CD8-positive, alpha-beta memory T cell (primary cell): ENCODE measurements at regions of chr1 and their contacts with region 1.

Region 1: GRCh38 chr1:28886731-28887418 is 27.5 kb upstream of the EPB41 start:
- DNase-seq: peak; percentile 85 to 92 (median 88)
- H3K4me3 ChIP-seq: peak overlapping the region; percentile 88
- H3K4me3 Mint-ChIP-seq: peak overlapping the region; percentile 82 to 98 (median 90)
- H3K27ac ChIP-seq: peak overlapping the region; percentile 83
- H3K27ac Mint-ChIP-seq: peak overlapping the region; percentile 88 to 98 (median 97)
- H3K4me1 ChIP-seq: peaks cover 47% of the 10 kb centered on the region
- H3K4me1 Mint-ChIP-seq: peaks cover 53 to 78% (median 68%) of the 10 kb centered on the region in 3 donors
- H3K27me3 ChIP-seq: no peaks in the 10 kb centered on the region
- H3K27me3 Mint-ChIP-seq: peaks cover 0 to 5% of the 10 kb centered on the region in 2 donors

Region 2: DNA sequence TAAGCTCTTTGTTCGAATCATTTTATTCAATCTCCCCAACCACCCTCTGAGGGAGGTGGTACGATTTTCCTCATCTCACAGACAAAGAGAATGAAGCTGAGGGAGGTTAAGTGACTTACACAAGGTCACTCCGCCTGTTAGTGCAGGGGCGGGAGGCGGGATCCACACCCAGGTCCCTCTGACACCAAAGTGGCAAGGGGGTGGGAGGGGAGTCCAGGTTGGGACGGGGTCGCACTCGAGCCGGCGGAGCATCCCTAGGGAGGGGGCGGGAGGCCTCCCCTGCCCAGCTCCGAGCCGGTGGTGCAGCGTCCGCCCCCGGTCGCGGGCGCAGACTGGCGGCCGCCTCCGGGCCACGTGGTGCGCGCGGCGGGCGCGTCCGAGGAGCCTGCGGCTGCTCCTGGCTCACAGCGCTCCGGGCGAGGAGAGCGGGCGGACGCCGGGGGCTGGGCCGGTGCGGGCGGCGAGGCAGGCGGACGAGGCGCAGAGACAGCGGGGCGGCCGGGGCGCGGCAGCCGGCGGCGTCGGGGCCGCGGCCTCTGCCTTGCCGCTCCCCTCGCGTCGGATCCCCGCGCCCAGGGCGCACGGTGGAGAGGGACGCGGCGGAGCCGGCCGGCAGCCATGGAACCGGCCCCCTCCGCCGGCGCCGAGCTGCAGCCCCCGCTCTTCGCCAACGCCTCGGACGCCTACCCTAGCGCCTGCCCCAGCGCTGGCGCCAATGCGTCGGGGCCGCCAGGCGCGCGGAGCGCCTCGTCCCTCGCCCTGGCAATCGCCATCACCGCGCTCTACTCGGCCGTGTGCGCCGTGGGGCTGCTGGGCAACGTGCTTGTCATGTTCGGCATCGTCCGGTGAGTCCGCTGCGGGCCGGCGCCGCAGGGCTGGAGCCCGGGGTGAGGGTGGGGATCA is 74.9 kb before region 1 on chr1 and contains the start of gene OPRD1:
- CTCF ChIA-PET with region 1: no interaction called
- POLR2A ChIA-PET with region 1: no interaction called
- DNase-seq: no peak
- H3K4me3 ChIP-seq: no peak within 1 kb of the TSS
- H3K4me3 Mint-ChIP-seq: peak within 1 kb of the TSS in 1 of 7 donors; percentile 32
- H3K27ac ChIP-seq: no peak within 1 kb of the TSS
- H3K27ac Mint-ChIP-seq: no peak within 1 kb of the TSS
- H3K4me1 ChIP-seq: no peaks in the 10 kb centered on the region
- H3K4me1 Mint-ChIP-seq: peaks cover 0 to 10% (median 5%) of the 10 kb centered on the region in 3 donors
- H3K27me3 ChIP-seq: peaks cover 24% of the 10 kb centered on the region
- H3K27me3 Mint-ChIP-seq: peaks cover 33 to 64% of the 10 kb centered on the region in 2 donors
- total RNA-seq, gene OPRD1: not detected

Region 3: DNA sequence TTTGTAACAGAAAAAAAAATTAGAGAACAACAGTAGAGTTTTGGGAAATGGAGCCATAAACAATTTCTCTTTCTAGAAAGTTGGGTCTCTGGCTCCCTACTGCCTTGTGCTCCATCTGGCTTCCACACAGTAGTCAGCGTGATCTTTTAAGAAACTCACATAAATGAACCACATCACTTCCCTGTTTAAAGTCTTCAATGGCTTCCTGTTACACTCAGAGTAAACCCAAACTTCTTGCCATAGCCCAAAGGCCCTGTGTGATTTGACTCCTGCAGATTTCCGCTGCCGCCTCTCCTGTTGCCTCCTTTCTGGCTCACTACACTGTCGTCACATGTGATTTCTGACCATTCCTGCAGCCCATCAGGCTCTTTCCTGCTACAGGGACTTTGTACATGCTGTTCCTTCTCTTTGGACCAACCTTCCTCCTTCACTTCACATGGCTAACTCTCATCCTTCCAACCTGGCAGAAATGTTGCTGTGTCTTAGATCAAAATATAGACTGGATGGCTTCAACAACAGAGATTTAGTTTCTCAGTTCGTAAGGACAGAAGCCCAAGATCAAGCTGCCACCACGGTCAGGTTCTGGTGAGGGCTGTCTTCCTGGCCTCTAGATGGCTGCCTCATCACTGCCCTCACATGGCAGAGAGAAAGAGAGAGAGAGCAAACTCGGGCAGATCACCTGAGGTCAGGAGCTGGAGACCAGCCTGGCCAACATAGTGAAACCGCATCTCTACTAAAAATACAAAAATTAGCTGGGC is 40.9 kb before region 1 on chr1:
- CTCF ChIA-PET with region 1: no interaction called
- POLR2A ChIA-PET with region 1: no interaction called
- DNase-seq: no peak
- H3K4me3 ChIP-seq: no peak overlapping the region
- H3K4me3 Mint-ChIP-seq: no peak overlapping the region
- H3K27ac ChIP-seq: no peak overlapping the region
- H3K27ac Mint-ChIP-seq: no peak overlapping the region
- H3K4me1 ChIP-seq: peaks cover 5% of the 10 kb centered on the region
- H3K4me1 Mint-ChIP-seq: peaks cover 0 to 6% (median 0%) of the 10 kb centered on the region in 3 donors
- H3K27me3 ChIP-seq: no peaks in the 10 kb centered on the region
- H3K27me3 Mint-ChIP-seq: peaks cover 4 to 8% of the 10 kb centered on the region in 2 donors

Region 4: GRCh38 chr1:28914228-28915030 is 27.6 kb after region 1 on chr1 and contains the start of gene EPB41:
- CTCF ChIA-PET with region 1: interaction called, 10 read pairs
- POLR2A ChIA-PET with region 1: interaction called, 12 read pairs
- DNase-seq: peak; percentile 86 to 91 (median 88)
- H3K4me3 ChIP-seq: peak within 1 kb of the TSS; percentile 98
- H3K4me3 Mint-ChIP-seq: peak within 1 kb of the TSS; percentile 97 to 100 (median 100)
- H3K27ac ChIP-seq: peak within 1 kb of the TSS; percentile 68
- H3K27ac Mint-ChIP-seq: peak within 1 kb of the TSS; percentile 89 to 97 (median 95)
- H3K4me1 ChIP-seq: peaks cover 47% of the 10 kb centered on the region
- H3K4me1 Mint-ChIP-seq: peaks cover 45 to 63% (median 46%) of the 10 kb centered on the region in 3 donors
- H3K27me3 ChIP-seq: no peaks in the 10 kb centered on the region
- H3K27me3 Mint-ChIP-seq: no peaks in the 10 kb centered on the region
- total RNA-seq, gene EPB41: 89.9 to 93.6 TPM

Region 5: DNA sequence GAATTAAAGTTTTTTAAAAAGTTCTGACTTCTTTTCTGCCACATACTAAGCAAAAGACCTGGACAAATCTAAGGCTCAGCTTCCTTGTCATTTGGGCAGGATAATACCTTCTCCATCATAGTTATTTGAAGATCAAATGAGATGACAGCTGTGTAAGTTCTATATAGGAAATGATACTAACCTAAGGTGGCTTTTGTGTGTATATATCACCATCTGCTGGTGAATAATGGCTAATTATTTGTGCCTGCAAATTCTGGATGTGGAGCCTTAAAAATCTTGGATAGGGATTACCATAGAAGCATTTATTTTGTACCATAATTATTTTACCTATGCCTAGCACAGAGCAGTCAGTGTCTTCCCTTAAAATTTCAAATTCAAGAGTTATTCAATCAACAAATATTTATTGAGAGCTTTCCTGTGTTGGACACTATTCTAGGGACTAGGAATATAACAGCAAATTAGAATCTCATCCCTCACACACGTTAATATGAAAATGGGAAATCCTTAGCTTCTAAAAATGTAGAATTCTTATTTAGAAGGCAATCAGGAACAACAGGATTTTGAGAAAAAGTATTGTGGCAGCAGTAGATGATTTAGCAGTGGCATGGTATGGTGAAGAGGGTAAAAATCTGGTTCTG is 147.1 kb after region 1 on chr1:
- CTCF ChIA-PET with region 1: interaction called, 182 read pairs
- POLR2A ChIA-PET with region 1: interaction called, 10 read pairs
- DNase-seq: peak in 2 of 5 donors; percentile 16 to 26
- H3K4me3 ChIP-seq: no peak overlapping the region
- H3K4me3 Mint-ChIP-seq: no peak overlapping the region
- H3K27ac ChIP-seq: no peak overlapping the region
- H3K27ac Mint-ChIP-seq: peak overlapping the region in 3 of 8 donors; percentile 18 to 51 (median 28)
- H3K4me1 ChIP-seq: no peaks in the 10 kb centered on the region
- H3K4me1 Mint-ChIP-seq: peaks cover 0 to 4% (median 3%) of the 10 kb centered on the region in 3 donors
- H3K27me3 ChIP-seq: no peaks in the 10 kb centered on the region
- H3K27me3 Mint-ChIP-seq: no peaks in the 10 kb centered on the region

Region 6: GRCh38 chr1:29197585-29197924 is 310.7 kb after region 1 on chr1:
- CTCF ChIA-PET with region 1: interaction called, 38 read pairs
- POLR2A ChIA-PET with region 1: no interaction called
- DNase-seq: peak in 2 of 5 donors; percentile 23 to 46
- H3K4me3 ChIP-seq: no peak overlapping the region
- H3K4me3 Mint-ChIP-seq: no peak overlapping the region
- H3K27ac ChIP-seq: no peak overlapping the region
- H3K27ac Mint-ChIP-seq: no peak overlapping the region
- H3K4me1 ChIP-seq: no peaks in the 10 kb centered on the region
- H3K4me1 Mint-ChIP-seq: peaks cover 0 to under 1% (median under 1%) of the 10 kb centered on the region in 3 donors
- H3K27me3 ChIP-seq: no peaks in the 10 kb centered on the region
- H3K27me3 Mint-ChIP-seq: no peaks in the 10 kb centered on the region

Region 7: DNA sequence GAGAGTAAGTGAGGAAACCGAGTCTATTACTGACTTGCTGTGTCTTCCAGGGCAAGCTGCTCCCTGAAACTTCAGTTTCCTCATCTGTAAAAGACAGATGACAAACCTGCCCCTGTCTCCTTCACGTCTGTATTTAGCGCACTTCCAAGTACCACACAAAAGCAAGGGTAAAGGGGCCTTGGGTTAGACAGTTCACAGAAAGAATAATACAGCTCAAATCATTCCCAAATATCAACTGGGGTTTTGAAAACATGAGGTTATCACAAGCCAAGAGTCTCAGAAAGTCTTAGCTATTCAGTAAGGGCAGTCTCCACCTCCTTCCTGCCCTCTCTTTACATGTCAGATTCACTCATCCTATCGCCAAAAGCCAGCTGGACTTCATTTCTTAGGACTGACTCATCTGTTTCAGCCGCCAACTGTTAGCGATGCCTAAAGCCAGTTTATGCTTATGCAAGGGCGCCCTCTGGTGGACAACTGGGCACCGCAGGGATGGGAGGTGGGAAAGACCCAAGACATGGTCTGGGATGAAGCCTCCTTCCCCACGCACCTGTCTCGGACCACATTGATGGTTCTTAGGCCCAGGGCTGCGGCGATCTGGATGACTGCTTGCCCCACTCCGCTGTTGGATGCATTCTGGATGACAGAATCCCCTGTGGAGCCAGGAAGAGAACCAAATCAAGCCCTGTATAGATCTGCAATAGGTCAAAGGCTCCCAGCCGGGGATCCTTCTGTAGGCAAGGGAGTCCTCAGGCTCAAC is 315.9 kb after region 1 on chr1:
- CTCF ChIA-PET with region 1: interaction called, 38 read pairs
- POLR2A ChIA-PET with region 1: no interaction called
- DNase-seq: peak; percentile 69 to 90 (median 83)
- H3K4me3 ChIP-seq: no peak overlapping the region
- H3K4me3 Mint-ChIP-seq: no peak overlapping the region
- H3K27ac ChIP-seq: peak overlapping the region; percentile 35
- H3K27ac Mint-ChIP-seq: peak overlapping the region in 1 of 8 donors; percentile 60
- H3K4me1 ChIP-seq: no peaks in the 10 kb centered on the region
- H3K4me1 Mint-ChIP-seq: peaks cover 0 to 5% (median 3%) of the 10 kb centered on the region in 3 donors
- H3K27me3 ChIP-seq: no peaks in the 10 kb centered on the region
- H3K27me3 Mint-ChIP-seq: no peaks in the 10 kb centered on the region